ENCODE measurements at regions of chr14 and their contacts with region 1.

Region 1: DNA sequence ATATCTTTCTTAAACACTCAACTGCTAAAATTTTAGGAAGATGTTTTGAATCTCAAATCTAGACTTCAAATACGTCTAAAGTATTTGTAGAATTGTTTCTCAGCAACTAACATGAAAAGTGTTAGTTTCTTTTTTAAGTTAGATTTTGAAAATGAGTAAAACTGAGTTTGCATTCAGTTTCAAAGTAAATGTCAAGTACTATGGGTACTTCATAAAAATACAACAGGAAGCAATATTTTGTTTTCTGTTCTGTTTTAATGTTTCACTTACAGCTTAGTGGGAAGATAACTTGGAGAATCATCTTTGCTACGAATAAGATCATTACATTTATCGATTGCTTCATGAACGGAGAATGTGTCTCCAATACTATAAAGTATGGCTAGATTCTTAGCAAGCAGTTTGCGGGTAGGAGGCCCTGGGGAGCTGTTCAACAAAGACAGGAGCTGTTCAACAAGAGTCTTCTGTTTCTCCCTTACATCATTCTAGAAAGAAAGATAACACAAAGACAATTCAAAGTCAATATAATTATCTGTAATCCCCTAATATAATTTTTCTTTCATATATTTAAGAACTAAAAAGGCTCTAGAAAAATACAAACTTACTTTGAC is 20.2 kb downstream of the HEATR5A start:
- DNase-seq: no peak
- H3K4me3 ChIP-seq: no peak overlapping the region
- H3K27ac ChIP-seq: no peak overlapping the region
- H3K4me1 ChIP-seq: no peaks in the 10 kb centered on the region
- H3K27me3 ChIP-seq: no peaks in the 10 kb centered on the region
- CTCF ChIP-seq: no peak
- POLR2A ChIP-seq: no peak

Region 2: GRCh38 chr14:31275731-31276130 is 124.4 kb before region 1 on chr14:
- intact Hi-C with region 1: no loop called
- DNase-seq: no peak
- H3K4me3 ChIP-seq: no peak overlapping the region
- H3K27ac ChIP-seq: no peak overlapping the region
- H3K4me1 ChIP-seq: no peaks in the 10 kb centered on the region
- H3K27me3 ChIP-seq: no peaks in the 10 kb centered on the region
- CTCF ChIP-seq: no peak
- POLR2A ChIP-seq: no peak

Region 3: GRCh38 chr14:31386271-31386670 is 13.9 kb before region 1 on chr14:
- intact Hi-C with region 1: loop called (anchors 2 kb)
- DNase-seq: no peak
- H3K4me3 ChIP-seq: no peak overlapping the region
- H3K27ac ChIP-seq: no peak overlapping the region
- H3K4me1 ChIP-seq: no peaks in the 10 kb centered on the region
- H3K27me3 ChIP-seq: no peaks in the 10 kb centered on the region
- CTCF ChIP-seq: no peak
- POLR2A ChIP-seq: no peak

Measured in breast epithelium (tissue), 4 donors.